PC-3 (cell line): ENCODE measurements at regions of chr15 and their contacts with region 1.

Region 1: GRCh38 chr15:23073890-23074646 is 34.7 kb upstream of the TUBGCP5 start:
- DNase-seq: peak; percentile 57
- ATAC-seq: peak; percentile 60
- H3K4me3 ChIP-seq: no peak overlapping the region; the same call in 1 of the 2 replicates
- H3K27ac ChIP-seq: no peak overlapping the region
- H3K4me1 ChIP-seq: no peaks in the 10 kb centered on the region
- H3K27me3 ChIP-seq: peaks cover 28% of the 10 kb centered on the region
- CTCF ChIP-seq: no peak

Region 2: DNA sequence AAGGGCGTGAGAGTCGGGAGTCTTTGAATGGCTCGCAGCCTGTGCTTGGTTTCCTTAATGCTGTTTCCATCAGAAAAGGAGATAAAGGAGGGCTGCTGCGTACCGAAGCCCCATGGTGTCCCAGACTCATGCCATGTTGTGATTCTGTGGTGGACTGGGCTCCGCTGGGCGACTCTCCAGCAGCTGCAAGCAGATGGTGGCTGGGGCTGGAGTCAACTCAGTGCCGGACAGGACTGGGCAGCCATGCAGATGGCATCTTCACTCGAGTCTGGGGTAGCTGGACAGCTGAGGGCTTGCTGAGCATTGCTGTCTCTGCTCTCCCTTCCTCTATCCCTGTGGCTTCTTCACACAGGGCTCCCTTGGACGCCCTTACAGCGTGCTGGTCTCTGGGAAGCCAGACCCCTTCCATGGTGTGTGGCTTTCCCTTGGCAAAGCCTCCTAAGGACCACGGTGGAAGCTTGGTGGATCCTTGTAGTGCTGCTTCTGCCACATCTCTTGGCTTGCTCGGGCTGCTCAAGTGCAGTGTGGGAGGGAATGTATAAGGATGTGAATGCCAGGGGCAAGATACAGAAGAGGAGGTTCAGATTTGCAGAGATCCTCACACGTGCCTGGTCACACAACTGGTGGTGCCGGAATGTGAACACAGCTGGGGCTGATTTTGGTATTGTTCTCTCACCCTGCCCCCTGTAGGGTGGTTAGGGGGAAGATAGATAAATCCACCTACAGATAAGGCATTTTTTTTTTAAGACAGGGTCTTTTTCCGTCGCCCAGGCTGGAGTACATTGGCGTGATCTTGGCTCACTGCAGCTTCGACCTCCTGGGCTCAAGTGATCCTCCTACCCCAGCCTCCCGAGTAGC is 278.6 kb before region 1 on chr15:
- CTCF ChIA-PET with region 1: no interaction called
- POLR2A ChIA-PET with region 1: no interaction called
- intact Hi-C with region 1: no loop called
- DNase-seq: no peak
- ATAC-seq: peak; percentile 21; the same call in 1 of the 2 replicates
- H3K4me3 ChIP-seq: no peak overlapping the region
- H3K27ac ChIP-seq: no peak overlapping the region
- H3K4me1 ChIP-seq: no peaks in the 10 kb centered on the region
- H3K27me3 ChIP-seq: no peaks in the 10 kb centered on the region
- CTCF ChIP-seq: no peak

Region 3: DNA sequence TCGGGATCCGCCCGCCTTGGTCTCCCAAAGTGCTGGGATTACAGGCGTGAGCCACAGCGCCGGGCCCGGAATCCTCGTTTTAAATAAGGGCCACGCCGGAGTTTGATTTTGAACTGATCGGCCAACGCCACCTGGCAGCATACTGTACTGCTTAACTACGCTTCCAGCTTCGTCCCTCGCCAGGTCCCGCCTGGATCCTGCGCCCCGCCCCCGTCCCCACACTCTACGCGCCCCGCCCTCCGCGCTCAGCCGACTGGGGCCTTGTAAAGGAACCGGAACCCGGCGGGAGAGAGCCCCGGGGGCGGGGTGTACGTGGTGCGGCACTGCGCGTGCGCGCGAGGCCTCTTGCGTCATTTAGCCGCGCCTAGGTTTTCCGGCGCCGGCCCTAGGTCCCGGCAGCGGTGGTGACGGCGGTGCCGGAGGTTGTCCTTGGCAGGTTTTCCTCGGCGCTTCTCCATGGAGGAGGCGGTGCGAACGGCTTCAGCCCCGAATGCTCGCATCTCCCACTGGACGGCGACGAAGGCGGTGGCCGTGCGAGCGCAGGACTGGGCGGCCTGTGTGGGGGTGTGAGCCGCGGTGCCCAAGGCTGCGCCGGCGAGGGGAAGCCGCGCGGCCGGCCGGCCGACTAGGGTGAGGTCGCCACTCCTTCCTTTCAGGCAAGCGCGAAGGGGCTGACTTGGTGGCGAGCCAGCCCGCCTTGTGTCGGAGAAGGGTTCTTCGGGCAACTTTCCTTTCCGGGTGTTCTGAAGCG is 235.6 kb before region 1 on chr15 and contains the start of gene NIPA2:
- CTCF ChIA-PET with region 1: no interaction called
- POLR2A ChIA-PET with region 1: no interaction called
- intact Hi-C with region 1: no loop called
- DNase-seq: peak; percentile 99
- ATAC-seq: peak; percentile 94
- H3K4me3 ChIP-seq: peak within 1 kb of the TSS; percentile 91
- H3K27ac ChIP-seq: peak within 1 kb of the TSS; percentile 85
- H3K4me1 ChIP-seq: peaks cover 9% of the 10 kb centered on the region
- H3K27me3 ChIP-seq: no peaks in the 10 kb centered on the region
- CTCF ChIP-seq: no peak
- total RNA-seq, gene NIPA2: 108 and 115 TPM in 2 replicates

Region 4: GRCh38 chr15:22872936-22873701 is 200.9 kb before region 1 on chr15:
- CTCF ChIA-PET with region 1: no interaction called
- POLR2A ChIA-PET with region 1: no interaction called
- intact Hi-C with region 1: no loop called
- DNase-seq: peak; percentile 83
- ATAC-seq: peak; percentile 85
- H3K4me3 ChIP-seq: no peak overlapping the region
- H3K27ac ChIP-seq: peak overlapping the region; percentile 38
- H3K4me1 ChIP-seq: peaks cover 14% of the 10 kb centered on the region
- H3K27me3 ChIP-seq: no peaks in the 10 kb centered on the region
- CTCF ChIP-seq: no peak

Region 5: DNA sequence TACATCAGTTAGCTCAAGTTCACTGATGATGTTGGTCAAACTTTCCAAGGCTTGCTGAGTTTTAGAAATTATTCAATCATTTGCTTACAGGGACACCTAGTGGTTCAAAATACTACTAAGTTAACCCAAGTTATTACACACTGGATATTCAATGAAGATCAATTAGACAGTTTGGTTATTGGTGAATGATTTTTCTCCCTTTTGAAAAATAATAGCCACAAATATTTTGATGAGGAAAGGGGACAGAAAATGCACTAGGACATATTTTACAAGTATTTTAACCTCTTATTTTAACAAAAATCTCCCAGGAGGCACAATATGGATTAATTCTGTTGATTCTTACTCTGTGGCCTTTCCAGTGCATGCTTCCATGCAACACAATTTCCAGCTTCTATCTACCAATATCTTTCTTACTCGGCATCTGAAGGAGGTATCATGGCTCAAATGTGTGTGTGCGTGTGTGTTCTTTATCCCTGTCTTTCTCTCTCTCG is 393.1 kb after region 1 on chr15:
- CTCF ChIA-PET with region 1: no interaction called
- POLR2A ChIA-PET with region 1: no interaction called
- intact Hi-C with region 1: loop called (anchors 10 kb)
- DNase-seq: peak; percentile 67
- ATAC-seq: peak; percentile 75
- H3K4me3 ChIP-seq: no peak overlapping the region
- H3K27ac ChIP-seq: no peak overlapping the region
- H3K4me1 ChIP-seq: no peaks in the 10 kb centered on the region
- H3K27me3 ChIP-seq: peaks cover 21% of the 10 kb centered on the region
- CTCF ChIP-seq: peak; percentile 75